Activated CD4-positive, alpha-beta memory T cell treated with anti-CD3 and anti-CD28 coated beads for 36 hours (primary cell): ENCODE measurements at regions of chr12 and their contacts with region 1.

Region 1: DNA sequence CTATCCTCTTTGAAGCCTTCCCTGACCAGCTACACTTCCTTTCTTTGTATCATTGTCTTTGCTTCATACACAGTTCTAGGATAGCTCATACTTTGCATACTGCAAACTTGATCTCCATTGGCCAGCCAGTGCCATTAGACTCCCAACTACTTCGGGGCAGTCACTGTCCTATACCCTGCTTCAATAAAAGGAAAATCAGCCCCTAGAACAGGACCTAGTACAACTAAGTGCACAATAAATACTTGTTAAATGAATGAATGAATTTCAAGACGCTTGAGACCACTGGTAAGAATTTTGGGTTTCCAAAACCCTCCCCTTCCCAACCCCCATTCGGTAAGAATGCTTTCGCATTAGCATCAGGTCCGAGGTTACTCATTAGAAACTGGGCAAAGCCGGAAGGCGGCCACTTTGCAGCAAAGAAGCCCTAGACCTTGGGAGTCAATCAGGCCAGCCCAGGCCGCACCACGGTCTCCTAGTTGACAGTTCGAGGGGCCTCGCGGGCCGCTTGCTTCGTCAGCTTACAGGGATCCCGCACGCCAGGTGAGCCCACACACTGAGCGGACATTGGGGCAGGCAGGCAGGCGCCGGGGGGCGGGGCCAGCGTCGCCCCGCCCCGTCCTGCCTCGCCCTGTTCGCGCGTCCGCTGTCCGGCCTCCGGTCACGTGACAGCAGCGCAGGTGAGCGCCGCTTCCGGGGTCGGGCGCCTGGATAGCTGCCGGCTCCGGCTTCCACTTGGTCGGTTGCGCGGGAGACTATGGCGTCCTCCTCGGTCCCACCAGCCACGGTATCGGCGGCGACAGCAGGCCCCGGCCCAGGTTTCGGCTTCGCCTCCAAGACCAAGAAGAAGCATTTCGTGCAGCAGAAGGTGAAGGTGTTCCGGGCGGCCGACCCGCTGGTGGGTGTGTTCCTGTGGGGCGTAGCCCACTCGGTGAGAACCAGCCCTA is at the start of gene PIP4K2C:
- DNase-seq: peak; percentile 89
- H3K4me3 Mint-ChIP-seq: peak within 1 kb of the TSS; percentile 84
- H3K27ac Mint-ChIP-seq: peak within 1 kb of the TSS; percentile 70
- H3K4me1 Mint-ChIP-seq: peaks cover 21% of the 10 kb centered on the region
- H3K27me3 Mint-ChIP-seq: no peaks in the 10 kb centered on the region
- total RNA-seq, gene PIP4K2C: 17.8 to 20.6 TPM

Region 2: GRCh38 chr12:57604454-57604991 is 13.7 kb after region 1 on chr12 and contains the start of gene DTX3:
- CTCF ChIA-PET with region 1: interaction called, 19 read pairs
- POLR2A ChIA-PET with region 1: interaction called, 11 read pairs
- intact Hi-C with region 1: loop called (anchors 2 kb)
- DNase-seq: peak; percentile 64
- H3K4me3 Mint-ChIP-seq: peak within 1 kb of the TSS; percentile 74
- H3K27ac Mint-ChIP-seq: peak within 1 kb of the TSS; percentile 68
- H3K4me1 Mint-ChIP-seq: peaks cover 22% of the 10 kb centered on the region
- H3K27me3 Mint-ChIP-seq: no peaks in the 10 kb centered on the region
- total RNA-seq, gene DTX3: 15.4 to 15.8 TPM

Region 3: GRCh38 chr12:57621497-57622292 is 30.9 kb after region 1 on chr12:
- CTCF ChIA-PET with region 1: interaction called, 112 read pairs
- POLR2A ChIA-PET with region 1: interaction called, 3 read pairs
- intact Hi-C with region 1: loop called (anchors 2 kb)
- DNase-seq: peak; percentile 68
- H3K4me3 Mint-ChIP-seq: peak overlapping the region; percentile 63
- H3K27ac Mint-ChIP-seq: no peak overlapping the region
- H3K4me1 Mint-ChIP-seq: peaks cover 24% of the 10 kb centered on the region
- H3K27me3 Mint-ChIP-seq: peaks cover 88% of the 10 kb centered on the region

Region 4: GRCh38 chr12:57641699-57642442 is 51.1 kb after region 1 on chr12:
- CTCF ChIA-PET with region 1: no interaction called
- POLR2A ChIA-PET with region 1: no interaction called
- intact Hi-C with region 1: no loop called
- DNase-seq: no peak
- H3K4me3 Mint-ChIP-seq: no peak overlapping the region
- H3K27ac Mint-ChIP-seq: no peak overlapping the region
- H3K4me1 Mint-ChIP-seq: no peaks in the 10 kb centered on the region
- H3K27me3 Mint-ChIP-seq: peaks cover 19% of the 10 kb centered on the region